HAP-1 (cell line): ENCODE measurements at regions of chr6 and their contacts with region 1.

Region 1: GRCh38 chr6:126361832-126362412 is 22.0 kb downstream of the CENPW start:
- DNase-seq: no peak
- H3K4me3 ChIP-seq: no peak overlapping the region
- H3K4me1 ChIP-seq: peaks cover 7% of the 10 kb centered on the region; the same call in 1 of the 2 replicates
- H3K27me3 ChIP-seq: no peaks in the 10 kb centered on the region

Region 2: GRCh38 chr6:126015863-126016262 is 346.1 kb before region 1 on chr6:
- in situ Hi-C with region 1: no loop called
- DNase-seq: no peak
- H3K4me3 ChIP-seq: no peak overlapping the region
- H3K4me1 ChIP-seq: no peaks in the 10 kb centered on the region
- H3K27me3 ChIP-seq: no peaks in the 10 kb centered on the region

Region 3: DNA sequence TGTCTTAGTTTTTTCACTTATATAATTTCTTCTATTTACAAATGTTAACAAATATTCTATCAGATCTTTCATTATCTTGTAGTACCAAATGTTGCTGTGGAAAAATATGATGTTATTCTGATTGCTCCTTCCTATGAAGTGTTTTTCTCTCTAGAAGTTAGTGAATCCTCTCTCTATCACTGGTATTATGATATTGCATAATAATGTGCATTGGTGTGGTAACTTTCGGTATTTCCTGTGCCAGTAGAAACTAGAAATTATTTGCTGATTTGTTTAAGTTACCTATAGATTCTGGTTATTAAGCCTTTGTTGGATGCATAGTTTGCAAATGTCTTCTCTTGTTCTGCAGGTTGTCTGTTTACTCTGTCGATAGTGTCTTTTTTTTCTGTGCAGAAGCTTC is 320.5 kb after region 1 on chr6:
- in situ Hi-C with region 1: no loop called
- DNase-seq: no peak
- H3K4me3 ChIP-seq: no peak overlapping the region
- H3K4me1 ChIP-seq: no peaks in the 10 kb centered on the region
- H3K27me3 ChIP-seq: no peaks in the 10 kb centered on the region

Region 4: GRCh38 chr6:126967296-126968005 is 605.5 kb after region 1 on chr6:
- in situ Hi-C with region 1: no loop called
- DNase-seq: no peak
- H3K4me3 ChIP-seq: no peak overlapping the region
- H3K4me1 ChIP-seq: peaks cover 4% of the 10 kb centered on the region; the same call in 1 of the 2 replicates
- H3K27me3 ChIP-seq: 0 out of 2 replicates have a peak, but pooled peaks cover 2% of the 10 kb centered on the region

Region 5: DNA sequence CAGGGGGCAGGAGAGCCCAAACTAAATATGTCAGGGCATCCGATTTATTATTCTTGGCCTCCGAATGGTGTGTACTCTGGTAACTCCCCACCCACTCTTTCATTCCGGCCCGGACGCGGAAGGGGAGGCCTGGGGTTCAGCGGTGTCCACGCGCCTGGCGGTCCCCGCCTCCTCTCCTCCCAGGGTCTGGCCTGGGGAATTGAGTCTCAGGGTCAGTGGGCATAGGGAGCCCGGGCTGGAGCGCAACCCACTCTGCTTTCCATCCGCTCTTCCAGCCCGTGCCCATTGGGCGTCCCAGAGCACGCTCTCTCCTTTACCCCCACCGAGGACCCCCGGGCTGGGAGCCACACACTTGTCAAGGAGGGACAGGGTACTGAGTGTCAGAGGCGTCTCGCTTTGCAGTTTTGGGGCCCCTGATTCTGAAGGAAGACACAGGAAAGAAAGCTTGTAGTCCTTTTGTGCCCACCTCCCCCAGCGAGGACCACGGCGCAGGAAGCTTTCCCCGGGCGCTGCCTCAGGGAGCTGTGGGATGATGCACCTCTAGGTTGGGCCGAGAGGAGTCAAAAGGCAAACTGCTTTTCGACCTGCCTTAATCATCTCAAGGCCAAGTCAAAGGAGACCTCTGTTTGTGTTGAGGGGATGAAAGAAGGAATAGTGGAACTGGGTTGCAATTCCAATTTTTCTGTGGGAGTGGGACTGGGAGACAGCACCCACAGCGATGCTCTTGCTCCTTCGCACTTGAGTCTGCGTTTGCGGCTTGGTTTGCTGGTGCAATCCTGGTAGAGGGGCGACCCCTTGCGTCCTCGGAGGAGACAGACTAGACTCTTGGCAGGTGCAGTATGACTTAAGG is 759.1 kb after region 1 on chr6:
- in situ Hi-C with region 1: loop called (anchors 25 kb)
- DNase-seq: peak; percentile 68 to 90
- H3K4me3 ChIP-seq: no peak overlapping the region
- H3K4me1 ChIP-seq: no peaks in the 10 kb centered on the region
- H3K27me3 ChIP-seq: peaks cover 18% of the 10 kb centered on the region